PC-9 (cell line): ENCODE measurements at regions of chr3 and their contacts with region 1.

Region 1: GRCh38 chr3:111071257-111072015 is at the start of gene NECTIN3:
- DNase-seq: peak; percentile 49 to 94
- H3K4me3 ChIP-seq: peak within 1 kb of the TSS; percentile 50
- H3K27ac ChIP-seq: no peak within 1 kb of the TSS
- H3K4me1 ChIP-seq: peaks cover 18% of the 10 kb centered on the region
- H3K27me3 ChIP-seq: peaks cover 31% of the 10 kb centered on the region
- CTCF ChIP-seq: no peak
- total RNA-seq, gene NECTIN3: 11.9 and 14.0 TPM in 2 replicates

Region 2: DNA sequence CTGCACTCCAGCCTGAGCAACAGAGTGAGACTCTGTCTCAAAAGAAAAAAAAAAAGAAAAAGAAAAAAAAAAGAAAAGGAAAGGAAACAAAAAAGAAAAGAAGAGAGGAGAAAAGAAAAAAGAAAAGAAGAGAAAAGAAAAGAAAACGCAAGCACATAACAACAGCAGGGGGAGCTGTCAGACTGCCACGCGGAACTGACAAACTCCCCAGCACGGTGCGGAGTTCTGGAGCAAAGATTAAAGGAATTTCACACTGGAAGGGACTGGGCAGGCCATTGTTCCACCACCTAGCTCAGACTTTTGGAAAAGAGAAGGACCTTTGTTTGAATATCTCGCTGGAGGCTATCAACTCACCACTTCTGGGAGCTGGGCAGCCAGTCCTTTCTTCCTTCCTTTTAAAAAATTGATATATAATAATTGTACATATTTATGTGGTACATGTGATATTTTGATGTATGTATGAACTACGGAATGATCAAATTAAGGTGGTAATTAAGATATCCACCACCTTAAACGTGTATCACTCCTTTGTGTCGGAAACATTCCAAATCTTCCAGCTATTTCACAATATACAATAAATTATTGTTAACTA is 1795.6 kb before region 1 on chr3:
- CTCF ChIA-PET with region 1: no interaction called
- POLR2A ChIA-PET with region 1: no interaction called
- intact Hi-C with region 1: loop called (anchors 10 kb)
- DNase-seq: peak in 1 of 2 experiments; percentile 38
- H3K4me3 ChIP-seq: no peak overlapping the region
- H3K27ac ChIP-seq: no peak overlapping the region
- H3K4me1 ChIP-seq: no peaks in the 10 kb centered on the region
- H3K27me3 ChIP-seq: no peaks in the 10 kb centered on the region
- CTCF ChIP-seq: peak; percentile 76

Region 3: GRCh38 chr3:110314512-110315114 is 756.8 kb before region 1 on chr3:
- CTCF ChIA-PET with region 1: no interaction called
- POLR2A ChIA-PET with region 1: no interaction called
- intact Hi-C with region 1: loop called (anchors 10 kb)
- DNase-seq: peak in 1 of 2 experiments; percentile 43
- H3K4me3 ChIP-seq: no peak overlapping the region
- H3K27ac ChIP-seq: no peak overlapping the region
- H3K4me1 ChIP-seq: no peaks in the 10 kb centered on the region
- H3K27me3 ChIP-seq: no peaks in the 10 kb centered on the region
- CTCF ChIP-seq: peak; percentile 97

Region 4: DNA sequence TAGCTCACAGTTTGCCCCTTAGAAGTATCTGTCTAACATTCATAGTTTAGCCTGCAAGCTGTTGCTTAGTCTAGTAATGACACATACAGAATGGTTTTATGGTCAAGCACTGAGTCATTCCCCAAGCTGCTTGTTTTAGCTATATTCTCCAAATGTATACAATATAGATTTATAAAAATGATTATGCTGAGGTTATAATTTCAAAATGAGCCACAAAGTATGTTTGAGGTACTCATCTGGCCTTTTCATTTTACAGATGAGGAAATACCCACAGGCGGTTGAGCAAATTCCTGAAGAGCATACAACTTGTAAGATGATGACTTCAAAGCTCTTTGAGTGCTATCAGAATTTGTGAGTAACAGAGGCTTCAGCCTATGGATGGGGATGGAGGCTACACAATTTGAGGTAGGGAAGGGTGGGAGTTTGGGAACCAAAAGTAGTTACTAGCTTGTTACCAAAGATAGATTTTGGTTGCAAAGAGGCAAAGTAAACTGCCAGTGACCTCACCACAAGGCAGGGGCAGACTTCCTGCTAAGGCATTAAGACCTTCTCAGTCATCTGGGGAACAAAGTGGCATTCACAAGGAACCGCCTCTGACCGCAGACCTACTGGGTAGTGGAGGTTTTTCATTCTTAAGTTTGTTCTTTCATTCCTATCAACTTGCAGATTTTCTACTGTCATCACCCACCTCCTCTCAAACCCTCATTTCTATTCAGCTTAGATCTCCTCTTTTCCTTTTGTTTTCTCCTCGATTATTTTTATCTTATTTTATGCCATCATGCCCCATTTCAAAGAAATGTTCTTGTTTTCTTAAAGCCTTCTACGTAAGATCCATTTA is 257.0 kb before region 1 on chr3:
- CTCF ChIA-PET with region 1: no interaction called
- POLR2A ChIA-PET with region 1: no interaction called
- intact Hi-C with region 1: loop called (anchors 10 kb)
- DNase-seq: peak in 1 of 2 experiments; percentile 47
- H3K4me3 ChIP-seq: no peak overlapping the region
- H3K27ac ChIP-seq: no peak overlapping the region
- H3K4me1 ChIP-seq: no peaks in the 10 kb centered on the region
- H3K27me3 ChIP-seq: no peaks in the 10 kb centered on the region
- CTCF ChIP-seq: no peak

Region 5: GRCh38 chr3:111539351-111540331 is 468.2 kb after region 1 on chr3:
- CTCF ChIA-PET with region 1: no interaction called
- POLR2A ChIA-PET with region 1: no interaction called
- intact Hi-C with region 1: loop called (anchors 2 kb)
- DNase-seq: peak in 1 of 2 experiments; percentile 65
- H3K4me3 ChIP-seq: peak overlapping the region; percentile 4
- H3K27ac ChIP-seq: peak overlapping the region; percentile 33
- H3K4me1 ChIP-seq: peaks cover 33% of the 10 kb centered on the region
- H3K27me3 ChIP-seq: no peaks in the 10 kb centered on the region
- CTCF ChIP-seq: peak; percentile 79

Region 6: DNA sequence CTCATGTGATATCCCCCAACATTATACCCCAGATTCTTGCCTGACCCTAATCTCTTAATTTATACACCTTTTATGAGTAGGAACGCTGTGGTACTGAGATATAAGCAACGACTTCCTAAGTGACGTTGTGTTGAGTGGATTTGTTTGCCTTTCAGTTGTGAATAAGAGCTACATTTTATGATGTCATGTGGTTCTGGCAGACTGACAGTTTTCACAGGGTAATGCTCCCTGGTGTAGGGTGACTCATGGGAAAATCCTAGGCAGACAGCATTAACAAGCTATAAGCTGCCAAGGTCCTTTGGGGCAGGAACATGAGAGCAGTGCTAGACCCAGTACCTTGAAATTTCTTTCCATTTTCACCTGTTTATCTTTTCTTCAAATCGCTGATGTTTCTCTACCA is 1025.9 kb after region 1 on chr3:
- CTCF ChIA-PET with region 1: no interaction called
- POLR2A ChIA-PET with region 1: no interaction called
- intact Hi-C with region 1: loop called (anchors 10 kb)
- DNase-seq: peak; percentile 74 to 99
- H3K4me3 ChIP-seq: no peak overlapping the region
- H3K27ac ChIP-seq: peak overlapping the region; percentile 62
- H3K4me1 ChIP-seq: peaks cover 17% of the 10 kb centered on the region
- H3K27me3 ChIP-seq: no peaks in the 10 kb centered on the region
- CTCF ChIP-seq: no peak